ENCODE measurements at regions of chr1 and their contacts with region 1.

Region 1: GRCh38 chr1:86499987-86500593 is 31.4 kb downstream of the CLCA1 start:
- DNase-seq: no peak
- H3K4me3 ChIP-seq: no peak overlapping the region
- H3K27ac ChIP-seq: no peak overlapping the region
- H3K4me1 ChIP-seq: peaks cover 24% of the 10 kb centered on the region
- H3K27me3 ChIP-seq: peaks cover 3% of the 10 kb centered on the region
- CTCF ChIP-seq: peak; percentile 77 to 78

Region 2: GRCh38 chr1:86380257-86380861 is 119.7 kb before region 1 on chr1:
- CTCF ChIA-PET with region 1: interaction called, 3 read pairs
- dilution Hi-C with region 1: no loop called
- in situ Hi-C with region 1: no loop called
- intact Hi-C with region 1: loop called (anchors 1 kb)
- DNase-seq: peak; percentile 51
- H3K4me3 ChIP-seq: no peak overlapping the region
- H3K27ac ChIP-seq: no peak overlapping the region
- H3K4me1 ChIP-seq: no peaks in the 10 kb centered on the region
- H3K27me3 ChIP-seq: no peaks in the 10 kb centered on the region
- CTCF ChIP-seq: peak; percentile 58 to 70

Region 3: DNA sequence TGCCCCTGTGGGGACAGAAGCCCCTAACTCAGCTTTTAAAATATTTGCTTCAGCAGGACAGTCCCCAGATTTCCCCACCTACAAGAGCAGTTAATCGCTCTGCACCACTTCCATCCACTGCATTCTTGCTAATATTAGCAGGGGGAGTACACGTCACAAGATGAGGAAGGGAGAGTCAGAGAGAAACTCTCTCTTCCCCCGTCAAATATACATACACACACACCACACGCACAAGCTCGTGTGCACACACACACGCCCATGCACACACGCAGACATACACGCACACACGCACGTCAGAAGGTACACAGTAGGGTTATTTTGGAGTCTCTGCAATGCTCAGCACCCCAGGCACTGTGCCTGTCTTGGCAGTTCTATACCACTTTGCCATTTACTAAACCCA is 29.2 kb before region 1 on chr1:
- CTCF ChIA-PET with region 1: interaction called, 3 read pairs
- dilution Hi-C with region 1: no loop called
- in situ Hi-C with region 1: no loop called
- intact Hi-C with region 1: loop called (anchors 1 kb)
- DNase-seq: no peak
- H3K4me3 ChIP-seq: no peak overlapping the region
- H3K27ac ChIP-seq: no peak overlapping the region
- H3K4me1 ChIP-seq: no peaks in the 10 kb centered on the region
- H3K27me3 ChIP-seq: no peaks in the 10 kb centered on the region
- CTCF ChIP-seq: no peak

Region 4: GRCh38 chr1:86616871-86617270 is 116.8 kb after region 1 on chr1:
- CTCF ChIA-PET with region 1: no interaction called
- dilution Hi-C with region 1: no loop called
- in situ Hi-C with region 1: no loop called
- intact Hi-C with region 1: no loop called
- DNase-seq: peak; percentile 70
- H3K4me3 ChIP-seq: no peak overlapping the region
- H3K27ac ChIP-seq: no peak overlapping the region
- H3K4me1 ChIP-seq: no peaks in the 10 kb centered on the region
- H3K27me3 ChIP-seq: no peaks in the 10 kb centered on the region
- CTCF ChIP-seq: no peak

Region 5: GRCh38 chr1:86687595-86687994 is 187.5 kb after region 1 on chr1:
- CTCF ChIA-PET with region 1: no interaction called
- dilution Hi-C with region 1: no loop called
- in situ Hi-C with region 1: loop called in 1 of 2 experiments (anchors 25 kb)
- intact Hi-C with region 1: no loop called
- DNase-seq: no peak
- H3K4me3 ChIP-seq: no peak overlapping the region
- H3K27ac ChIP-seq: no peak overlapping the region
- H3K4me1 ChIP-seq: no peaks in the 10 kb centered on the region
- H3K27me3 ChIP-seq: no peaks in the 10 kb centered on the region
- CTCF ChIP-seq: peak; percentile 7 to 17

Region 6: GRCh38 chr1:86741947-86742572 is 242.0 kb after region 1 on chr1:
- CTCF ChIA-PET with region 1: no interaction called
- dilution Hi-C with region 1: no loop called
- in situ Hi-C with region 1: no loop called
- intact Hi-C with region 1: loop called (anchors 1 kb)
- DNase-seq: peak; percentile 12
- H3K4me3 ChIP-seq: no peak overlapping the region
- H3K27ac ChIP-seq: no peak overlapping the region
- H3K4me1 ChIP-seq: no peaks in the 10 kb centered on the region
- H3K27me3 ChIP-seq: no peaks in the 10 kb centered on the region
- CTCF ChIP-seq: peak; percentile 56 to 65

Measured in mammary epithelial cell (primary cell).